ENCODE measurements at regions of chr4 and their contacts with region 1.

Region 1: DNA sequence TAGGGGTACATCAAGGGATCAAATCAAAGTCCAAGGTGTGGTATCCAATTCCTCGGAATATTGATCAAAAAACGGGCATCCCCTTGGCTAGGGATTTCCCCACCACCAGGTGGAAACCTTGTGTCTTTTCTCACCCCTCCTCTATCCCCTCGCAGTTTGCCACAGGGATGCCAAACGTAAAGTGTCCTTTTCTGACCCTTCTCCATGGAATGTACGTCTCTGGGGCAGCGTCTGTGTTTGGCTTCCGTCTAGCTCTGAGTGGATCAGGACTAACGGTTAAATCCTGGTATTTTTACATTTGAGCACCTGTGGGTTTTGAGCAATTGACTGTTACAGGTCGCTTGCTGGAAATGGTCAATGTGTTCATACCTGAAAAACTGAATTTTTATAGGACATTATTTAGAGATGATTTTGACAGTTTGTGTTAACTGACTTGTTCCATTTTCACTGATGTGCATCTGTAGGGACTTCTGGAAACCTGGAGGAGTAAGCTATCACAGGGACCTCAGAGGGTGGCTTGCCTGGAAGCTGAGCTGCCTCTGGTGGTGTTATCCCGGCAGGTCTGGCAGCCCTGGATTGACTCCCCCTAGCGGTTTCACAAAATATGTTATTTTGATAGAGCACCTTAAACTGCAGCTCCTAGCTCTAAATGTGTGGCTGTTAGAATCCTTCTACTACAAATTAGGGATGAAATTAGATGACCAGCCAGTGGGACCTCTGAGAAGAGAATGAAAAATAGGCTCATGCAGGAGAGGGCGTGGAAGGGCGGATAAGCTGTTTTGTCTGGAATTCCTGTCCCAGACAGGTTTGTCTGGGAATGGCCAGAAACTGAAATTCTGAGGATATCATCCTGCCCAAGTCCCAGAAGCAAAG is 8.8 kb upstream of the MGST2 start:
- DNase-seq: peak; percentile 74
- H3K4me3 ChIP-seq: peak overlapping the region in 1 of 2 experiments; percentile 26; a peak in 2 of 4 replicates
- H3K27ac ChIP-seq: no peak overlapping the region
- H3K4me1 ChIP-seq: peaks cover 6 to 11% of the 10 kb centered on the region in 2 experiments; a peak in 2 of 4 replicates
- H3K27me3 ChIP-seq: no peaks in the 10 kb centered on the region
- CTCF ChIP-seq: peak; percentile 88
- EP300 ChIP-seq: no peak
- RAD21 ChIP-seq: peak; percentile 59

Region 2: GRCh38 chr4:139457318-139457717 is 199.5 kb before region 1 on chr4:
- CTCF ChIA-PET with region 1: no interaction called
- POLR2A ChIA-PET with region 1: no interaction called
- DNase-seq: no peak
- H3K4me3 ChIP-seq: no peak overlapping the region
- H3K27ac ChIP-seq: no peak overlapping the region
- H3K4me1 ChIP-seq: peaks cover 17 to 30% of the 10 kb centered on the region in 2 experiments; a peak in 3 of 4 replicates
- H3K27me3 ChIP-seq: no peaks in the 10 kb centered on the region
- CTCF ChIP-seq: no peak
- EP300 ChIP-seq: no peak
- RAD21 ChIP-seq: no peak

Region 3: DNA sequence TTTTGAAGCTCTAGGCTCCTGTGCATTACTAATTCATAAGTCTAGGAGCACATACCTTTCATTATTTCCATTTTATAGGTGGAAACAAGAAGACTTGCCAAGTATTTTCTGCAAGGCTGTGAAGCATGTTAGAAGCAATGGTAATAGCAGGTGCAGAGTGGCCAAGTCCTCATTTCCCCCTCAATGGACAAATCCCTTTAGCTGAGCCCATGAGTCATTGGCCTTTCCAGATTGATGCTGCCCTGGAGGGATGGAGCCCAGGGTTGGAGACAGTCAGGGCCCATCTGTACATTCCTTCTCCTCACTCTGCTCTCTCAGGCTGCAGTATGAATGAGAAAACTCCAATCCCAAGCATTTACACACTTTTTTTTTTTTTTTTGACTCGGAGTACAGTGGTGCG is 15.4 kb after region 1 on chr4:
- CTCF ChIA-PET with region 1: interaction called, 77 read pairs
- POLR2A ChIA-PET with region 1: no interaction called
- DNase-seq: no peak
- H3K4me3 ChIP-seq: no peak overlapping the region
- H3K27ac ChIP-seq: no peak overlapping the region
- H3K4me1 ChIP-seq: peaks cover 0 to 2% of the 10 kb centered on the region in 2 experiments; a peak in 1 of 4 replicates
- H3K27me3 ChIP-seq: no peaks in the 10 kb centered on the region
- CTCF ChIP-seq: no peak
- EP300 ChIP-seq: no peak
- RAD21 ChIP-seq: no peak

Region 4: GRCh38 chr4:140252742-140253555 is 596.1 kb after region 1 on chr4:
- CTCF ChIA-PET with region 1: interaction called, 12 read pairs
- POLR2A ChIA-PET with region 1: no interaction called
- DNase-seq: peak; percentile 94
- H3K4me3 ChIP-seq: peak overlapping the region; percentile 47 to 55
- H3K27ac ChIP-seq: peak overlapping the region; percentile 78 to 92
- H3K4me1 ChIP-seq: peaks cover 49 to 57% of the 10 kb centered on the region in 2 experiments
- H3K27me3 ChIP-seq: no peaks in the 10 kb centered on the region
- CTCF ChIP-seq: peak; percentile 87
- EP300 ChIP-seq: peak in 1 of 2 experiments; percentile 40; a peak in 1 of 4 replicates
- RAD21 ChIP-seq: peak; percentile 85